ENCODE measurements at regions of chr2 and their contacts with region 1.

Region 1: GRCh38 chr2:190996338-190996946 is 17.5 kb downstream of the STAT1 start:
- H3K4me3 ChIP-seq: no peak overlapping the region
- H3K27ac ChIP-seq: no peak overlapping the region
- H3K4me1 ChIP-seq: no peaks in the 10 kb centered on the region
- CTCF ChIP-seq: peak; percentile 30; the same call in 1 of the 2 replicates

Region 2: GRCh38 chr2:191012845-191013681 is 16.6 kb after region 1 on chr2:
- CTCF ChIA-PET with region 1: interaction called, 12 read pairs
- POLR2A ChIA-PET with region 1: no interaction called
- H3K4me3 ChIP-seq: peak overlapping the region; percentile 98
- H3K27ac ChIP-seq: peak overlapping the region; percentile 52; the same call in 1 of the 2 replicates
- H3K4me1 ChIP-seq: no peaks in the 10 kb centered on the region
- CTCF ChIP-seq: no peak

Measured in HEK293 (cell line).